Right ventricle myocardium superior (tissue), 1 donor: ENCODE measurements at regions of chr1 and their contacts with region 1.

Region 1: DNA sequence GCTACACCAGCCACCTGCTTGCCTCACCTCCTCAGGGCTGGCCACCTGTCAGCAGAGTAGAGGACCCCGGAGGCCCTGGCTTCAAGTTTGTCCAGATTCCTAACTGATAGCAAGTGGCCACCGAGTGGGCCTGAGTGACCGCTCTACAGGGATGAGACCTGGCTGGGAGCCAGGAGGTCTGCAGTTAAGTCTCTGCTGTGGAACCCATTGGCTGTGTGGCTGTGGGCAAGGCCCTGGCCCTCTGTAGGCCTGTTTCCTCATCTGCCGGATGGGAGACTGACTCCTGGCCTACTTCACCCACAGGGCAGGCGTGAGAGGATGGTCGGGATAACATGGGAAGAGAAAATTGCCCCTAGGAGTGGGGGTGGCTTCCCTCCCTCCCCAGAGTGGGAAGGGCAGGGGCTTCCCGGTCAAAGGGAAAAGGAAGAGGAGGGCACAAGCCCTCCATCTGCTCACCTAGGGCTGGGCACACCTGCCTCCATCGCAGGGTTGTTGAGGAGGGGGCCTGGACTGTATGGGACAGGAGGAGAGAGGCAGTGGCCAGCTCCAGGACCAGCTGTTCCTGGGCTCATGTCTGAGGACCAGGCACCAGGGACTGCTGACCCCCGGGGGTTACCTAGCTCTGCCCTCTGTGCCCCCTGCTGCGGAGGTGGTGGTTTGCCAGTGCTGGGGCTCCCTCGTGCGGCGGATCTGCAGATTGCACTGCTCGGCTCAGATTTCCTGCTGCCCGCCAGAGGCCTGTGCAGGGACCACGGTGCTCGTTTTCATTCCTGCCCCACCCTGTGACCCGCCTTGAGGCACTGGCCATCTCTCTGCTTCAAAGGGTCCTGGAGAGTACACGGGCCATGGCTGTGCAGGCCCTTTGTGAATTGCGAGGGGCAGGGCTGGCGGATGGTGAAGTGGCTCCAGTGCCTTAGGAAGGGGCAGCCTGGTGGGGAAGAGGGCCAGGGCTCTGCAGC is 9.1 kb upstream of the MTFR1L start:
- DNase-seq: peak; percentile 88
- ATAC-seq: peak; percentile 72

Region 2: GRCh38 chr1:25504706-25505595 is 305.7 kb before region 1 on chr1:
- intact Hi-C with region 1: loop called (anchors 5 kb)
- DNase-seq: no peak
- ATAC-seq: no peak

Region 3: GRCh38 chr1:25608488-25609178 is 202.0 kb before region 1 on chr1:
- intact Hi-C with region 1: loop called (anchors 5 kb)
- DNase-seq: peak; percentile 93
- ATAC-seq: peak; percentile 94

Region 4: DNA sequence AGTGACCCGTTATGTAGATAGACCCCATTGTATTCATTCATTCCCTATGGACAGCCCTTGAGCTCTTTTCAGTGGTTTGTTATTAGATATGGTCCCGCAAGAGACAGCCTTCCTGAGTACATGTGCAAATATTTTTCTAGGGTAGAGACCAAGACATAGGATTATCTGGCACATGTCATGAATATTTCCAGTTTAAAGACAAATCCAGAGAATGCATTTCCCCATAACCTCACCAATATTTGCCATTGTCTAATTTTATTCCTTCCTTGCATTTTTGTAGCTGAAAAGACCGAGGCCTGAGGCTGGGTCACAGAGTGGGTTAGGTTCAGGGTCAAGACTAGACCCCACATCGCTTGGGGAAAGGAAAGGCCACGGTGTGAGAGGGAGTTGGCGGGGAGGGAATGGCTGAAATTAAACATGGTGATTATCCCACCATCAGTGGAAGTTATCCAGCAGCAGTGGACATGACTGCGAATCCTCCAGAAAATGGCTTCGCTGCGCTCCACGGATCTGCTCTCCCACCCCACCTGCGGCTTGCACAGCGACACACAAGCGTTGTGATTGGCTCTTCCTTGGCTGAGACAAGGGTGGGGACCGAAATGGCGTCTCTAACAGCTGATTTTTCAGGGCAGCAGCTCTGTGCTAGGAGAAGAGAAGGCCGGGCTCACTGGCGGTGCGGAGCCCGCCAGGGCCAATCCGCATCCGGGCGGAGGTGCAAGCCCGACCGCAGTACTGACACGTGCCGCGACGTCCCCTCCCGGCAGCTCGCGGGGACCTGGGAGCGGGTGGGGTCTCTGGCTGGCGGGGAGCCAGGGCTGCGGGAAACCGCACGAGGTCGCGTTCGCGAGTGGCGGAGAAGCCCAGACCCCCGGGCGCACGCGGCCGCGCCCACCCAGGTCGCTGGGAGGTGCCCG is 111.7 kb after region 1 on chr1:
- intact Hi-C with region 1: no loop called
- DNase-seq: peak; percentile 66
- ATAC-seq: peak; percentile 74